ENCODE measurements at regions of chr3 and their contacts with region 1.

Region 1: GRCh38 chr3:108477511-108478147 is 32.8 kb downstream of the MYH15 start:
- DNase-seq: peak in 34 of 35 experiments; percentile 7 to 74 (median 44)
- ATAC-seq: peak; percentile 60 to 72 (median 68)
- H3K4me3 ChIP-seq: no peak overlapping the region
- H3K4me3 Mint-ChIP-seq: no peak overlapping the region
- H3K27ac ChIP-seq: no peak overlapping the region
- H3K27ac Mint-ChIP-seq: no peak overlapping the region
- H3K4me1 ChIP-seq: no peaks in the 10 kb centered on the region
- H3K4me1 Mint-ChIP-seq: peaks cover 0 to 3% (median 3%) of the 10 kb centered on the region in 3 donors
- H3K27me3 ChIP-seq: no peaks in the 10 kb centered on the region
- H3K27me3 Mint-ChIP-seq: peaks cover 2 to 3% of the 10 kb centered on the region in 2 donors

Region 2: GRCh38 chr3:107235928-107236315 is 1241.7 kb before region 1 on chr3:
- CTCF ChIA-PET with region 1: interaction called in 1 of 2 experiments, 14 read pairs
- POLR2A ChIA-PET with region 1: no interaction called
- DNase-seq: peak in 31 of 35 experiments; percentile 2 to 82 (median 32)
- ATAC-seq: peak; percentile 61 to 72 (median 66)
- H3K4me3 ChIP-seq: peak overlapping the region in 1 of 2 donors; percentile 7
- H3K4me3 Mint-ChIP-seq: peak overlapping the region; percentile 52 to 67 (median 59)
- H3K27ac ChIP-seq: no peak overlapping the region
- H3K27ac Mint-ChIP-seq: peak overlapping the region in 1 of 2 donors; percentile 11
- H3K4me1 ChIP-seq: peaks cover 6 to 8% of the 10 kb centered on the region in 2 experiments
- H3K4me1 Mint-ChIP-seq: peaks cover 11 to 13% (median 13%) of the 10 kb centered on the region in 3 donors
- H3K27me3 ChIP-seq: peaks cover 0 to 4% of the 10 kb centered on the region in 2 experiments
- H3K27me3 Mint-ChIP-seq: peaks cover 4 to 8% of the 10 kb centered on the region in 2 donors

Region 3: DNA sequence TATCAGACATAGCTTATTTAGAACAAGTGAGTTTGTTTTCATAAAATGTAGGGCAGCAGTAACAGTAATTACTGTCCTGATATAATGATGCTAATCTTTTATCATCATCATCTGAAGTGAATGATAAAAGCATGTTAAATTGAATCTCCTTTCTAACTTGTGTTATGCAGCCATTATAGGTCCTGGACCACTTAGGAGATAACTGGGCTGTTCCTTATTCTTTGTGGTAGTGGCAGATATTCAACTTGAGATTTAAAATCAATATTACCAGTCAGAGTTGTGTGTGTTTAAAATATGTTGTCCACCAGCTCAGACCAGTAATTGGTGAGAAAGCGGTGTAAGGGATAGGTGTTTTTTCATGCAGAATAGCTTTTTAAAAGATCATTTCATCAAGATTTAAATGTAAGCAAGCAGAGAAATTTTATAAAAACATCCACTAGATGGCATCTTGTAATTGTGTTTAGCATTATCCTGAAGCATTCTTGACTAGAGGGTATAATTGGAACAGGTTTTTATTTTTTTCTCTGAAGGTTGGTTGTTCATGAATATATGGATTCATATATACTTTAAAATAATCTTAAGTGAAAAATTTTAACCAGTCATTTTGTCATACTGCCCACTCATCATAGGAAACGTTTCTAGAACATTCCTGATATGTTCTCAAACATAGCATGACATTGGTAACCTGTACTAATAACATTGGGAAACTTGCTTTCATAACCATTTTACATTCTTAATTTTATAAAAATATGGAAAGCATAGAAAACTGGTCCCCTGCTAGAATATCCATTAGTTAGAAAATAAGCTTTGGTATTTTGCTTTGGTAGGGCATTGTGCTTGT is 800.9 kb before region 1 on chr3:
- CTCF ChIA-PET with region 1: interaction called in 1 of 2 experiments, 16 read pairs
- POLR2A ChIA-PET with region 1: no interaction called
- DNase-seq: peak in 1 of 35 experiments; percentile 42
- ATAC-seq: peak in 2 of 4 experiments; percentile 50 to 54
- H3K4me3 ChIP-seq: no peak overlapping the region
- H3K4me3 Mint-ChIP-seq: no peak overlapping the region
- H3K27ac ChIP-seq: no peak overlapping the region
- H3K27ac Mint-ChIP-seq: peak overlapping the region in 1 of 2 donors; percentile 3
- H3K4me1 ChIP-seq: peaks cover 0 to 6% of the 10 kb centered on the region in 2 experiments
- H3K4me1 Mint-ChIP-seq: peaks cover 41 to 42% (median 41%) of the 10 kb centered on the region in 3 donors
- H3K27me3 ChIP-seq: no peaks in the 10 kb centered on the region
- H3K27me3 Mint-ChIP-seq: no peaks in the 10 kb centered on the region

Region 4: DNA sequence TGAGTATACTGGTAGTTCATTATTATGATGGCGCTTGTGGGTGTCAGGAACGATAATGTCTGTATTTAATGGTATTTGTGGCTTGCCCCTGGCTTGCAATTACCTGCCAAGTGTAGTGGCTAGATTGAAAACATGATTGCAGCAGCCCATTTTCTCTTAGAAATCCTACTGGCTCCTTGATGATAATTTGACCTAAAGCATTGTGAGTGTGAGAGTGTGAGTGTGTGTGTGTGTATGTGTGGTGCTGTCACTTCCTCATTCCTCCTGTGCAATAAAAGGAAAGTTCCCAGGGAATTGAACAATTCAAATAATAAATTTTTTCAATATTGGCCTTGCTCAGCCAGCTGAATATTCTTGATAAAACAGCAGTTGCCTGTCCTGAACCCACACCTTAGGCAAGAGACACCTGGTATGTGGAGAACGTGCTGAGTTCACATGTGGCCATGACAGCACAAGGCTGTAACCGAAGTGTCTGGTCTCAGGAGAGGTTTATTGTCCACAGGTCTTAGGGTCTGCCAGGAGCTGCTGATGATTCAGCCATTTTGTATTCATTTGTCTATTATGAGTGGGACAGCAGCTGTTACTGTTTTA is 580.1 kb before region 1 on chr3:
- CTCF ChIA-PET with region 1: no interaction called
- POLR2A ChIA-PET with region 1: no interaction called
- DNase-seq: no peak
- ATAC-seq: no peak
- H3K4me3 ChIP-seq: no peak overlapping the region
- H3K4me3 Mint-ChIP-seq: no peak overlapping the region
- H3K27ac ChIP-seq: no peak overlapping the region
- H3K27ac Mint-ChIP-seq: no peak overlapping the region
- H3K4me1 ChIP-seq: no peaks in the 10 kb centered on the region
- H3K4me1 Mint-ChIP-seq: peaks cover 0 to 4% (median 0%) of the 10 kb centered on the region in 3 donors
- H3K27me3 ChIP-seq: peaks cover 0 to 14% of the 10 kb centered on the region in 2 experiments
- H3K27me3 Mint-ChIP-seq: peaks cover 31 to 38% of the 10 kb centered on the region in 2 donors

Region 5: DNA sequence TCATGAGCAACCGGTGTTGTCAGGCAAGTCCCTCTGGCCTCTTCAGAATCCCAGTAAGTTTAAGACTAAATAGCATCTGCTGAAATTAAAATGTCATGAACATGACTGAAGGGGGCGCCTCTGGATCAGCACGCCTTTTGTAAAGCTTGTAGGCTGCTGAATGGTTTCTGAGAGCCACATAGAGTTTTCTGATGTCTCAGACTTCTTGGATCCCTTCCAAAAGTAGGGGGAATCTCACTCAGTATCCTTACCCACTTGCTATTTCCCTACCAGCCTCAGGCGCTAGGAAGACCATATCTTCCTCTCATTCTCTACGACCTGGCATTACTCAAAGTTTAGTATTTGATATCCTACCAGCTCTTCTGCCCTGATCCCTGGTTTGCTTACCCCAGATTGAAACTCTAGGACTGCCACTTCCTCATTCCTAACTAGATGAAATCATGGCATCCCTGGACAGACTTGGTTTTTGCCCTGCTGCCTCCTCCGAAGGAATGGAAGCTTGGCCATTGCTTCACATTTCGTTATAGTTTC is 324.1 kb before region 1 on chr3:
- CTCF ChIA-PET with region 1: interaction called, 7 to 16 read pairs
- POLR2A ChIA-PET with region 1: no interaction called
- DNase-seq: peak in 34 of 35 experiments; percentile 3 to 67 (median 34)
- ATAC-seq: peak in 3 of 4 experiments; percentile 58 to 71 (median 66)
- H3K4me3 ChIP-seq: no peak overlapping the region
- H3K4me3 Mint-ChIP-seq: no peak overlapping the region
- H3K27ac ChIP-seq: no peak overlapping the region
- H3K27ac Mint-ChIP-seq: peak overlapping the region in 1 of 2 donors; percentile 41
- H3K4me1 ChIP-seq: no peaks in the 10 kb centered on the region
- H3K4me1 Mint-ChIP-seq: peaks cover 9 to 19% (median 10%) of the 10 kb centered on the region in 3 donors
- H3K27me3 ChIP-seq: no peaks in the 10 kb centered on the region
- H3K27me3 Mint-ChIP-seq: no peaks in the 10 kb centered on the region

Region 6: GRCh38 chr3:108441071-108441507 is 36.5 kb before region 1 on chr3:
- CTCF ChIA-PET with region 1: interaction called in 1 of 2 experiments, 12 read pairs
- POLR2A ChIA-PET with region 1: no interaction called
- DNase-seq: no peak
- ATAC-seq: no peak
- H3K4me3 ChIP-seq: no peak overlapping the region
- H3K4me3 Mint-ChIP-seq: no peak overlapping the region
- H3K27ac ChIP-seq: no peak overlapping the region
- H3K27ac Mint-ChIP-seq: no peak overlapping the region
- H3K4me1 ChIP-seq: no peaks in the 10 kb centered on the region
- H3K4me1 Mint-ChIP-seq: no peaks in the 10 kb centered on the region
- H3K27me3 ChIP-seq: no peaks in the 10 kb centered on the region
- H3K27me3 Mint-ChIP-seq: peaks cover 0 to 3% of the 10 kb centered on the region in 2 donors

Region 7: GRCh38 chr3:108489771-108490170 is 12.1 kb after region 1 on chr3:
- CTCF ChIA-PET with region 1: interaction called, 13 to 21 read pairs
- POLR2A ChIA-PET with region 1: no interaction called
- DNase-seq: peak in 28 of 35 experiments; percentile 3 to 83 (median 25)
- ATAC-seq: peak; percentile 54 to 80 (median 77)
- H3K4me3 ChIP-seq: no peak overlapping the region
- H3K4me3 Mint-ChIP-seq: no peak overlapping the region
- H3K27ac ChIP-seq: no peak overlapping the region
- H3K27ac Mint-ChIP-seq: no peak overlapping the region
- H3K4me1 ChIP-seq: no peaks in the 10 kb centered on the region
- H3K4me1 Mint-ChIP-seq: peaks cover 2 to 5% (median 3%) of the 10 kb centered on the region in 3 donors
- H3K27me3 ChIP-seq: no peaks in the 10 kb centered on the region
- H3K27me3 Mint-ChIP-seq: no peaks in the 10 kb centered on the region

Region 8: GRCh38 chr3:108552267-108553159 is 74.9 kb after region 1 on chr3:
- CTCF ChIA-PET with region 1: interaction called, 3 to 12 read pairs
- POLR2A ChIA-PET with region 1: no interaction called
- DNase-seq: peak in 3 of 35 experiments; percentile 11 to 65 (median 14)
- ATAC-seq: peak in 1 of 4 experiments; percentile 40
- H3K4me3 ChIP-seq: no peak overlapping the region
- H3K4me3 Mint-ChIP-seq: no peak overlapping the region
- H3K27ac ChIP-seq: no peak overlapping the region
- H3K27ac Mint-ChIP-seq: no peak overlapping the region
- H3K4me1 ChIP-seq: no peaks in the 10 kb centered on the region
- H3K4me1 Mint-ChIP-seq: peaks cover 0 to 7% (median 1%) of the 10 kb centered on the region in 3 donors
- H3K27me3 ChIP-seq: no peaks in the 10 kb centered on the region
- H3K27me3 Mint-ChIP-seq: no peaks in the 10 kb centered on the region